CD8-positive, alpha-beta T cell (primary cell): ENCODE measurements at regions of chr1 and their contacts with region 1.

Region 1: DNA sequence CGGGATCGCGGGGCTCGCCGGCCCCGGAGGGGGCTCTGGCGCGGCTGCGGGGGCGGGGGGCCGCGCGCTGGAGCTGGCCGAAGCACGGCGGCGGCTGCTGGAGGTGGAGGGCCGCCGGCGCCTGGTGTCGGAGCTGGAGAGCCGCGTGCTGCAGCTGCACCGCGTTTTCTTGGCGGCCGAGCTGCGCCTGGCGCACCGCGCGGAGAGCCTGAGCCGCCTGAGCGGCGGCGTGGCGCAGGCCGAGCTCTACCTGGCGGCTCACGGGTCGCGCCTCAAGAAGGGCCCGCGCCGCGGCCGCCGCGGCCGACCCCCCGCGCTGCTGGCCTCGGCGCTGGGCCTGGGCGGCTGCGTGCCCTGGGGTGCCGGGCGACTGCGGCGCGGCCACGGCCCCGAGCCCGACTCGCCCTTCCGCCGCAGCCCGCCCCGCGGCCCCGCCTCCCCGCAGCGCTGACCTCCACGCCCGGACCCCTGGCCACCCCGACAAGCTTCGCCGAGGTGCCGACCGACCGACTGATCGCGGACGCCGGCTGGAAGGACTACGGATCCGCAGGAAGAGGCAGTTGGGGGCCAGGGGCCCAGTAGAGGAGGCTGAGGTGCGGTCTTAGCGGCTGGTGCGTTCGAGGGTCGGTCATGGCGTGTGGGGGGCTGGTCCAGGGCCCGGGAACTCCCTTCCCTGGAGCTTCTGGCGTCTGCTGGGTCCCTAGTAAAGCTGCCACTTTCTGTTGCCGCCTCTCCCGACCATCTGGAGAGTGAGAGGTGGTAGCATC is 711 bp downstream of the TRNP1 start:
- DNase-seq: peak in 4 of 9 experiments; percentile 28 to 59 (median 54)
- ATAC-seq: peak; percentile 37
- H3K4me3 ChIP-seq: peak overlapping the region; percentile 33 to 61
- H3K4me3 Mint-ChIP-seq: peak overlapping the region; percentile 78
- H3K27ac ChIP-seq: no peak overlapping the region
- H3K27ac Mint-ChIP-seq: no peak overlapping the region
- H3K4me1 ChIP-seq: peaks cover 12% of the 10 kb centered on the region
- H3K4me1 Mint-ChIP-seq: peaks cover 13% of the 10 kb centered on the region
- H3K27me3 ChIP-seq: peaks cover 19 to 33% of the 10 kb centered on the region in 2 experiments
- H3K27me3 Mint-ChIP-seq: peaks cover 47% of the 10 kb centered on the region
- CTCF ChIP-seq: no peak

Region 2: GRCh38 chr1:26981146-26981846 is 12.9 kb before region 1 on chr1:
- CTCF ChIA-PET with region 1: interaction called, 40 read pairs
- POLR2A ChIA-PET with region 1: no interaction called
- intact Hi-C with region 1: no loop called
- DNase-seq: no peak
- ATAC-seq: no peak
- H3K4me3 ChIP-seq: no peak overlapping the region
- H3K4me3 Mint-ChIP-seq: no peak overlapping the region
- H3K27ac ChIP-seq: no peak overlapping the region
- H3K27ac Mint-ChIP-seq: no peak overlapping the region
- H3K4me1 ChIP-seq: no peaks in the 10 kb centered on the region
- H3K4me1 Mint-ChIP-seq: no peaks in the 10 kb centered on the region
- H3K27me3 ChIP-seq: peaks cover 0 to 5% of the 10 kb centered on the region in 2 experiments
- H3K27me3 Mint-ChIP-seq: peaks cover 25% of the 10 kb centered on the region
- CTCF ChIP-seq: no peak

Region 3: GRCh38 chr1:27010989-27011764 is 17.0 kb after region 1 on chr1:
- CTCF ChIA-PET with region 1: interaction called, 33 read pairs
- POLR2A ChIA-PET with region 1: no interaction called
- intact Hi-C with region 1: no loop called
- DNase-seq: no peak
- ATAC-seq: no peak
- H3K4me3 ChIP-seq: no peak overlapping the region
- H3K4me3 Mint-ChIP-seq: no peak overlapping the region
- H3K27ac ChIP-seq: no peak overlapping the region
- H3K27ac Mint-ChIP-seq: no peak overlapping the region
- H3K4me1 ChIP-seq: peaks cover 7% of the 10 kb centered on the region
- H3K4me1 Mint-ChIP-seq: peaks cover 14% of the 10 kb centered on the region
- H3K27me3 ChIP-seq: peaks cover 8 to 19% of the 10 kb centered on the region in 2 experiments
- H3K27me3 Mint-ChIP-seq: peaks cover 25% of the 10 kb centered on the region
- CTCF ChIP-seq: no peak

Region 4: DNA sequence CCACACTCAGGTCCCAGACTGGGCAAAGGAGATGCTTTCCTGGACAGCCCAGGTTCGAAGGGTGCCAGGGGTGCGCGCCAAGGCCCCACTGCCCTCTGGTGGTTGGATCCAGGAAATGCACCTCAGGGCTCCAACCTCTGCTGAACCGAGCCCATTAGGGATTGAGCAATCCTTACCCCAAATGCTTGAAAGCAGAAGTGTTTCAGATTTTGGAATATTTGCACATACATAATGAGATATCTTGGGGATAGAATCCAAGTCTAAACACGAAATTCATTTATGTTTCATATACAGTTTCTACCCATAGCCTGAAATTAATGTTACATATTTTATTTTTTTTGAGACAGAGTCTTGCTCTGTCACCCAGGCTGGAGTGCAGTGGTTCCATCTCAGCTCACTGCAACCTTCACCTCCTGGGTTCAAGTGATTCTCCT is 103.3 kb after region 1 on chr1:
- CTCF ChIA-PET with region 1: interaction called, 5 read pairs
- POLR2A ChIA-PET with region 1: no interaction called
- intact Hi-C with region 1: loop called (anchors 1 kb)
- DNase-seq: peak; percentile 47 to 83 (median 73)
- ATAC-seq: peak; percentile 100
- H3K4me3 ChIP-seq: no peak overlapping the region
- H3K4me3 Mint-ChIP-seq: no peak overlapping the region
- H3K27ac ChIP-seq: no peak overlapping the region
- H3K27ac Mint-ChIP-seq: no peak overlapping the region
- H3K4me1 ChIP-seq: no peaks in the 10 kb centered on the region
- H3K4me1 Mint-ChIP-seq: peaks cover 3% of the 10 kb centered on the region
- H3K27me3 ChIP-seq: no peaks in the 10 kb centered on the region
- H3K27me3 Mint-ChIP-seq: no peaks in the 10 kb centered on the region
- CTCF ChIP-seq: peak; percentile 90